ENCODE measurements at regions of chr2 and their contacts with region 1.

Region 1: GRCh38 chr2:109348671-109349550 is 219.9 kb downstream of the SH3RF3 start:
- DNase-seq: peak in 7 of 9 donors; percentile 68 to 86 (median 80)
- ATAC-seq: peak; percentile 96
- H3K4me3 ChIP-seq: peak overlapping the region; percentile 43
- H3K4me3 Mint-ChIP-seq: peak overlapping the region; percentile 69 to 85 (median 78)
- H3K27ac ChIP-seq: peak overlapping the region; percentile 68
- H3K27ac Mint-ChIP-seq: peak overlapping the region; percentile 68 to 96 (median 93)
- H3K4me1 ChIP-seq: peaks cover 24 to 53% of the 10 kb centered on the region in 2 donors
- H3K4me1 Mint-ChIP-seq: peaks cover 23 to 75% (median 68%) of the 10 kb centered on the region in 7 donors
- H3K27me3 ChIP-seq: no peaks in the 10 kb centered on the region
- H3K27me3 Mint-ChIP-seq: peaks cover 0 to 16% (median 0%) of the 10 kb centered on the region in 5 donors

Region 2: DNA sequence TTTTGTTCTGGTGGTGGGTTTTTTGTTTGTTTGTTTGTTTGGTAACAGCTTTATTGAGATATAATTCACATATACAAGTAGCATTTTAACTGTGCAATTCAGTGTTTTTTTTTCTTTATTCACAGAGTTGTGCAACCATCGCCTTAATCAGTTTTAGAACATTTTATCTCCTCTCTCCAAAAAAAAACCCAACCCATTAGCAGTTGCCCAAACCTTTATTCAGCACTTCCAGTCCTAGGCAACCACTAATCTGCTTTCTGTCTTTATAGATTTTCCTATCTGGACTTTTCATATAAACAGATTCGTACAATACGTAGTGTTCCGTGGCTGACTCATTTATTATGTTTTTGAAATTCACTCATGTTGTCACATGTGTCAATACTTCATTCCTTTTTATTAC is 523.7 kb before region 1 on chr2:
- CTCF ChIA-PET with region 1: no interaction called
- POLR2A ChIA-PET with region 1: no interaction called
- intact Hi-C with region 1: no loop called
- DNase-seq: no peak
- ATAC-seq: no peak
- H3K4me3 ChIP-seq: no peak overlapping the region
- H3K4me3 Mint-ChIP-seq: no peak overlapping the region
- H3K27ac ChIP-seq: no peak overlapping the region
- H3K27ac Mint-ChIP-seq: no peak overlapping the region
- H3K4me1 ChIP-seq: no peaks in the 10 kb centered on the region
- H3K4me1 Mint-ChIP-seq: no peaks in the 10 kb centered on the region
- H3K27me3 ChIP-seq: no peaks in the 10 kb centered on the region
- H3K27me3 Mint-ChIP-seq: no peaks in the 10 kb centered on the region

Region 3: DNA sequence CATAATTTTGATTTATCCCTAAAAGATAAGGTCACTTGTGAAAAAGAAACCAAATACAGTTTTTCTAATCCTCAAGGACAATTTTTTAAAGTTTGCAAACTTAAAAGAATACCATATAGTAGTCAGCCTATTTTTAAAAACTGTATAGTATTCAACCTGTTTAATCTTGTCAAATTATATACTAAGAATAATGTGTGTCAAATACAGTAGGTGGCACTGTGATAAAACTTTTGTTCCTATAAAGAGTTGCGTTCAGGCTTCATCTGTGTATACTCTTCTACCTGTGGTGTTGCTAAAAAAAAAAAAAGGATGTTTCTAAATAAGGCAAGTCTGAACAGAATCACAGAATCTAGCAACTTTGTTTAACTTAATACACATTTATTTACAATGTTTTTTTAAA is 493.7 kb before region 1 on chr2:
- CTCF ChIA-PET with region 1: interaction called, 3 read pairs
- POLR2A ChIA-PET with region 1: no interaction called
- intact Hi-C with region 1: loop called in 1 of 2 experiments (anchors 1 kb)
- DNase-seq: peak in 6 of 9 donors; percentile 27 to 66 (median 54)
- ATAC-seq: peak; percentile 85
- H3K4me3 ChIP-seq: no peak overlapping the region
- H3K4me3 Mint-ChIP-seq: no peak overlapping the region
- H3K27ac ChIP-seq: no peak overlapping the region
- H3K27ac Mint-ChIP-seq: no peak overlapping the region
- H3K4me1 ChIP-seq: no peaks in the 10 kb centered on the region
- H3K4me1 Mint-ChIP-seq: peaks cover 0 to 8% (median 4%) of the 10 kb centered on the region in 7 donors
- H3K27me3 ChIP-seq: no peaks in the 10 kb centered on the region
- H3K27me3 Mint-ChIP-seq: no peaks in the 10 kb centered on the region

Region 4: GRCh38 chr2:109128048-109128465 is 220.9 kb before region 1 on chr2:
- CTCF ChIA-PET with region 1: interaction called, 4 read pairs
- POLR2A ChIA-PET with region 1: interaction called, 5 read pairs
- intact Hi-C with region 1: loop called (anchors 1 to 2 kb)
- DNase-seq: peak; percentile 49 to 76 (median 70)
- ATAC-seq: peak; percentile 80
- H3K4me3 ChIP-seq: peak overlapping the region; percentile 64
- H3K4me3 Mint-ChIP-seq: peak overlapping the region; percentile 81 to 100 (median 87)
- H3K27ac ChIP-seq: peak overlapping the region; percentile 67
- H3K27ac Mint-ChIP-seq: peak overlapping the region in 8 of 9 donors; percentile 64 to 93 (median 80)
- H3K4me1 ChIP-seq: peaks cover 0 to 16% of the 10 kb centered on the region in 2 donors
- H3K4me1 Mint-ChIP-seq: peaks cover 24 to 68% (median 55%) of the 10 kb centered on the region in 7 donors
- H3K27me3 ChIP-seq: no peaks in the 10 kb centered on the region
- H3K27me3 Mint-ChIP-seq: peaks cover 0 to 54% (median 0%) of the 10 kb centered on the region in 5 donors

Region 5: GRCh38 chr2:109213646-109214417 is 135.1 kb before region 1 on chr2:
- CTCF ChIA-PET with region 1: no interaction called
- POLR2A ChIA-PET with region 1: no interaction called
- intact Hi-C with region 1: loop called (anchors 1 to 5 kb)
- DNase-seq: peak; percentile 39 to 87 (median 81)
- ATAC-seq: peak; percentile 82
- H3K4me3 ChIP-seq: no peak overlapping the region
- H3K4me3 Mint-ChIP-seq: peak overlapping the region; percentile 56 to 83 (median 78)
- H3K27ac ChIP-seq: no peak overlapping the region
- H3K27ac Mint-ChIP-seq: peak overlapping the region; percentile 54 to 95 (median 77)
- H3K4me1 ChIP-seq: peaks cover 44 to 56% of the 10 kb centered on the region in 2 donors
- H3K4me1 Mint-ChIP-seq: peaks cover 60 to 79% (median 72%) of the 10 kb centered on the region in 7 donors
- H3K27me3 ChIP-seq: peaks cover 16 to 23% of the 10 kb centered on the region in 2 donors
- H3K27me3 Mint-ChIP-seq: peaks cover 58 to 74% (median 61%) of the 10 kb centered on the region in 5 donors

Region 6: GRCh38 chr2:109280793-109281192 is 68.1 kb before region 1 on chr2:
- CTCF ChIA-PET with region 1: no interaction called
- POLR2A ChIA-PET with region 1: no interaction called
- intact Hi-C with region 1: loop called in 1 of 2 experiments (anchors 2 kb)
- DNase-seq: no peak
- ATAC-seq: no peak
- H3K4me3 ChIP-seq: no peak overlapping the region
- H3K4me3 Mint-ChIP-seq: no peak overlapping the region
- H3K27ac ChIP-seq: no peak overlapping the region
- H3K27ac Mint-ChIP-seq: no peak overlapping the region
- H3K4me1 ChIP-seq: no peaks in the 10 kb centered on the region
- H3K4me1 Mint-ChIP-seq: peaks cover 0 to 40% (median 5%) of the 10 kb centered on the region in 7 donors
- H3K27me3 ChIP-seq: no peaks in the 10 kb centered on the region
- H3K27me3 Mint-ChIP-seq: no peaks in the 10 kb centered on the region

Region 7: DNA sequence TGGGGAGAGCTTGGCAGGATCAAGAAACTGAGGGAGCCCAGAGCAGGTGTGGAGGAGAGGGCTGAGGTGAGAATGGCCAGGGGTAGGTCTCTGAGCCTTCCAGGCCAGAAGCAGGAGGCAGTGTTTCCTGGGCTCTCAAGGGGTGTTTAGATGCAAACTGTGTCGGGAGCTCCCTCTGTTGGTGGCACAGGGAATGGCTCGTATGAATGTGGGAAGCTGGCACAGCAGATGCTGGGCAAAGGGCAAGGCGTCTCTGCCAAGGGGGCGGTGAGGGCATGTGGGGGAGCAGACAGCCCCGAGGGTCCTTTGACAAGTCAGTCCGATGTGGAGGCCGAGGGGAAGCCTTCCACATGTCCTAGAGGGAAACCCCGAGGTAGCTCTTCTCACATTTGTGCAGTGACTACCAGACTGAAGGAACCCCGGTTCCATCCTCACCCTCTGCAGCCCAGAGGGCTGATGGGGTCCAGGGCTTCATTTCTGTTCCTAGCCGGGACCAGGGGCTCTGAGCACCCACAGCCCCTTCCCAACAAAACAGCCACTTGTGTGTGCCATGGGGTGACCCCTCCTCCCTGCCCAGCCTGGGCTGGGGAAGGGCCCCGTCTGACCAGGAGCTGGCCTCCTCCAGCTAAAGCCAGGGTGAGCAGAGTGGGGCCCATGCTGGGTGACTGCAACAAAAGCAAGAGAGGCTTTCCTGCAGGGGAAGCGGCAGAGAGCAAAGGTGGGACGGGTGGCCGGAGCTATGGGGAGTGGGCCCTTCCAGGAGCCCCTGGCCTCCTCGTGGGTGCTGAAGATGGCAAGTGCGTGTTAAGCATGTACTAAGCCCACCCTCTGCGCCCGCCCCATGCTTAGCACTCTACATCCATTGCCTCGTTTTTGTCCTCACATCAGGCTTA is 161.5 kb after region 1 on chr2:
- CTCF ChIA-PET with region 1: interaction called, 3 read pairs
- POLR2A ChIA-PET with region 1: no interaction called
- intact Hi-C with region 1: loop called (anchors 1 to 10 kb)
- DNase-seq: peak; percentile 56 to 83 (median 74)
- ATAC-seq: peak; percentile 80
- H3K4me3 ChIP-seq: no peak overlapping the region
- H3K4me3 Mint-ChIP-seq: no peak overlapping the region
- H3K27ac ChIP-seq: no peak overlapping the region
- H3K27ac Mint-ChIP-seq: peak overlapping the region in 4 of 9 donors; percentile 22 to 46 (median 44)
- H3K4me1 ChIP-seq: peaks cover 0 to 2% of the 10 kb centered on the region in 2 donors
- H3K4me1 Mint-ChIP-seq: peaks cover 0 to 7% (median 4%) of the 10 kb centered on the region in 7 donors
- H3K27me3 ChIP-seq: no peaks in the 10 kb centered on the region
- H3K27me3 Mint-ChIP-seq: no peaks in the 10 kb centered on the region